Posterior vena cava (tissue), 2 donors: ENCODE measurements at regions of chr13 and their contacts with region 1.

Region 1: DNA sequence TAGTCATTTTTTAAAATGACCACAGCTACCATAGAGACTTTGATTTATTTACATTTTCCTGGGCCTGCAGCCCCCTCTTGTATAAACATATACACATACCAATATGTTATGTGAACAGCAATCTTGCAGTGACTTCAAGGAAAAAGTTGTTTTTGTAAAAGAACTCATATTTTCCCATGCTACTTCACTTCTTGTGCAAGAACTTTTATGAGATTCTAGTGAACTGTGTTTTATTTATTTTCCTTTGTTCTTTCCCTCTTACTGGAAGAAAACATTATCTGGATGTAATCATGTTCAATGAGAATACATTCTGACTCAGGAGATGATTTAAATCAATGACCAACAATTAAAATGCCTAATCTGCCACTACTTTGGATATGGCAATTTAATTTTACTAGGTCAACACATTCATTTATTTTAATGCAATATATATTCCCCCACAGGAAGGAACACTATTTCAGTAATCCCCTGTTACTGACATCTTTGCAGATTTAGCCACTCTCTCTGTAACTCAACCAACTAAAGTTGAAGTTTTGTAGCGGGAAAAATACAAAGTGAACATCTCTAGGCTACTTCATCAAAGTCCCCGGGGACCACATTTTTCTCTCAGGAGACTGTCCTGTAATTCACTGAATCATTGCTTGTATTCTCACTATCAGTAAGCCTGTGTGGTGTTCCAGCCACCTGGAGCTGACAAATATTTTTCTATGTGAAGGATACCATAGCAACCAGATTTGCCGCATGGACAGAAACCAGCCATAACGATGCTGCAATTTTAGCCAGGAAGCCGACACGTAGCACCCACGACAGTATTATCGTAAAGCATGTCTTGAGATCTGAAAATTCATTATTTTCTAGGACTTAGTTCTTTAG is 90.5 kb downstream of the STARD13 start:
- DNase-seq: no peak

Region 2: DNA sequence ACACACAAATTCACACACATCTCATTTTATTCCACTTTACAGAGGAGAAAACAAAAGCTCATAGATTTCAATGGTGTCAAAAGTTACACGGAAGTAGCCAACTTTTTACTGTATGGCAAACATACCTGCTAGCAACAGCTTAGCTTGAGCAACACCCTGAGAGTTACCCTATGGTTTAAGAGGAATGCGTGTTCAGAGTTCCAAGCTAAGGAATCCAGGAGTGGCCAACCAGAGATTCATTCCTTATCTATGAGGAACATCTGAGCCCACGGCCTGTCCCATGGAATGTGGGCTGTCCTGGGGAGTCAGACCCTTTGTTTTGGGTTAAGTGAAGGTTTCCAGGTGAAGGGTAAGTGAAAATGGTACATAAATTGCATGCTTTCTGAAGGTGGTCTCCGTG is 22.9 kb after region 1 on chr13:
- intact Hi-C with region 1: no loop called
- DNase-seq: no peak

Region 3: GRCh38 chr13:33251131-33251661 is 56.1 kb after region 1 on chr13:
- intact Hi-C with region 1: loop called in 1 of 2 experiments (anchors 2 kb)
- DNase-seq: no peak

Region 4: DNA sequence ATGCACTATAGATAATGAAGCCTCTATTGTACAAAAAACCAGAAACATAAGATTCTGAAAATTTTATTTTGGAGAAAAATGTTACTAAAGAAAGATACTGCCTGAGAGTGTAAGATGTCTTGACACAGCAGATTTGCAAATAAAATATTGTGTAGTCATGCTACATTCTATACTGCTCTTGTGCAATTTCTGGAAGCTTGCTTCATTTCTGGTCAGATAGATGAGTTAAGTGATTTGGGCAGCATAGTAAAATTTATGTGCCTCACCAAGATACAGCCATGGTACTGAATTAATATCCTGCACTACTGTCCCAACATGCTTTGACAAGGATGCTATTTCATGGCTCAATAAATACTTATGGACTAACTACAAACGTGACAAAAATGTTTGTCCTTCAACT is 145.6 kb after region 1 on chr13:
- intact Hi-C with region 1: no loop called
- DNase-seq: no peak